ENCODE measurements at regions of chr12 and their contacts with region 1.

Region 1: DNA sequence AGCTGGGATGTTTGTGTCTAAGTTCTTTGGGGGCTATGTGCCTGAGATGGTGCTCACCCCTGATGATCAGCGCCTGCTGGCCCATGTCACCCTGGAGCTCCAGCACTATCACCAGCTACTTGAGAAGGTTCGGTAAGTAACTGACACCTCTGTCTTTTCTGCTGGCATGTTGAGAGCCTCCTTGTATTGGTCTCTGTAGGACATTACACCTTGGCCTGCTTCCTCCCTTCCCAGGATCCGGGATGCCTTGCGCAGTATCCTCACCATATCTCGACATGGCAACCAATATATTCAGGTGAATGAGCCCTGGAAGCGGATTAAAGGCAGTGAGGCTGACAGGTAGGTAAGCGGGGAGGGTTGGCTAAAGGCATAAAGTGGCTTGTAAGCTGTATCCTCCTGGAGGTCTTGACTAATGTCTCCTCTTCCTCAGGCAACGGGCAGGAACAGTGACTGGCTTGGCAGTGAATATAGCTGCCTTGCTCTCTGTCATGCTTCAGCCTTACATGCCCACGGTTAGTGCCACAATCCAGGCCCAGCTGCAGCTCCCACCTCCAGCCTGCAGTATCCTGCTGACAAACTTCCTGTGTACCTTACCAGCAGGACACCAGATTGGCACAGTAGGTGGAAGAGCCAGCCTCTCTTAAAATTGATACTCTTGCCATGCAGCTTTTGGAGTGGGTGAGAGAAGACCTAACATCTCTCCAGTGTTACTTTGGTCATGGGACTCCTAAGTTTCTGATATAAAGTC is 5.4 kb downstream of the DDIT3 start:
- DNase-seq: no peak
- H3K4me3 ChIP-seq: no peak overlapping the region
- H3K27ac ChIP-seq: no peak overlapping the region
- H3K4me1 ChIP-seq: peaks cover 15% of the 10 kb centered on the region
- CTCF ChIP-seq: no peak

Region 2: GRCh38 chr12:56661979-56662638 is 852.8 kb before region 1 on chr12:
- CTCF ChIA-PET with region 1: no interaction called
- POLR2A ChIA-PET with region 1: interaction called, 10 read pairs
- intact Hi-C with region 1: no loop called
- DNase-seq: no peak
- H3K4me3 ChIP-seq: no peak overlapping the region
- H3K27ac ChIP-seq: no peak overlapping the region
- H3K4me1 ChIP-seq: no peaks in the 10 kb centered on the region
- CTCF ChIP-seq: no peak

Region 3: GRCh38 chr12:57500213-57500612 is 14.7 kb before region 1 on chr12:
- CTCF ChIA-PET with region 1: no interaction called
- POLR2A ChIA-PET with region 1: interaction called, 11 read pairs
- intact Hi-C with region 1: no loop called
- DNase-seq: no peak
- H3K4me3 ChIP-seq: no peak overlapping the region
- H3K27ac ChIP-seq: no peak overlapping the region
- H3K4me1 ChIP-seq: no peaks in the 10 kb centered on the region
- CTCF ChIP-seq: no peak